Psoas muscle (tissue), 8 donors: ENCODE measurements at regions of chr6 and their contacts with region 1.

Region 1: DNA sequence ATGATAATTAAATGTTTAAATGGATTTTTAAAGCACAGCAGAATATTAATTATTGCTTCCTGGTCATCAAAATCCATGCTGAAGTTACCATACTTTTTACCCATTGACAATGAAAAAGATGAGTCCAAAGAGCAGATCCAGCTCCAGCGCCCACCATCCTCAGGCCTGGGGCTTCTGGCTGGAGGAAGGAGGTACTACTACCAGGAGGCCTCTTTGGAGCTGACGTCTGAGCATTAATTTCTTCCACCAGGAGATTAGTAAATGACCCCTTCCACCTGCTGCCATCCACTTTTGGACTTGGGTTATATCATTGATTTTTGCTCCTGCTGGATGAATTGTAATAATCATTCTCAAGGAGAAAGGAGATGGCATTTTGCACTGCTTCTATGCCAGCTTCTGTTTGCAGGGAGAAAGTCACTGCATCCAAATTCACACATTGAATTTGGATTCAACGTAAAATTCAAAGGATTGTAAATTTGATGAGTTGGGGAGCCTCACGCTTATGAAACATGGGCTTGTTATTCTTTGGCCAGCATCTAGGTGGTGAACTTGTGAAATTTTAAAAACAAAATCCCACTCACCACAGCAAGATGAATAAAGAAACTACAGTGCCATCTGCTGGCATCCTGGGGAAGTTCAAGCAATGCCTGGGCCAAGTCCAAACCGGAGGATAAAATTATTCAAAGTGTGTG is 121.8 kb downstream of the SASH1 start:
- DNase-seq: peak; percentile 56 to 65
- ATAC-seq: peak; percentile 57 to 84 (median 65)
- H3K4me3 ChIP-seq: no peak overlapping the region
- H3K27ac ChIP-seq: no peak overlapping the region
- H3K4me1 ChIP-seq: peaks cover 9% of the 10 kb centered on the region
- H3K27me3 ChIP-seq: no peaks in the 10 kb centered on the region
- CTCF ChIP-seq: peak; percentile 93

Region 2: DNA sequence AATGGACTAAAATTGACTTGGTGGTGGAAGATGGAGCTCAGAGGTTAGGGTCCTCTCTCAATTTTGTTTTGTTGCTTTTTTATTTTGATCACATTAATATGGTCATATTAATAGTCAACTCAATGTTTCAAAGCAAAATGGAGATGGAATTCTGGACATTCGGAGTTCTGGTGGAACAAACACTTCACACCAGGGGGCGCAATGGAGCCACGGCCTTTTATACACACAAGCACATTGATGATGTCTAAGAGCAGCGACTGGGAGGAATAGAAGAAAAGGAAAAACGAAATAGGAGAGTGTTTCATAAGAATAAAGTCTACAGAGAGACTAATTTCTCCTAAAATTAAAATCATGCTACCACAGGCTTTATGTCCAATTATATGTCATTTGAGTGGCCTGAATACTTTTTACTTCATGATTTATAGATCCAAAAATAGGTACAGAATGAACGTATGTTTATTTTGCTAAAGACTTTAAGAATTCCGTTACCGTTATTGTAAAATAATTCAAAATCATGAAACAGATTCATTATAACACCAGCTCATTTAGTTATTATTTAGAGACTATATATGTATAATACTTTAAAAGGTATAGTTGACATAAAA is 319.4 kb before region 1 on chr6:
- intact Hi-C with region 1: loop called (anchors 10 kb)
- DNase-seq: peak; percentile 75 to 86
- ATAC-seq: peak in 3 of 4 donors; percentile 55 to 80 (median 56)
- H3K4me3 ChIP-seq: peak overlapping the region; percentile 25
- H3K27ac ChIP-seq: no peak overlapping the region
- H3K4me1 ChIP-seq: no peaks in the 10 kb centered on the region
- H3K27me3 ChIP-seq: peaks cover 0 to 3% (median 0%) of the 10 kb centered on the region in 3 donors
- CTCF ChIP-seq: peak; percentile 78

Region 3: DNA sequence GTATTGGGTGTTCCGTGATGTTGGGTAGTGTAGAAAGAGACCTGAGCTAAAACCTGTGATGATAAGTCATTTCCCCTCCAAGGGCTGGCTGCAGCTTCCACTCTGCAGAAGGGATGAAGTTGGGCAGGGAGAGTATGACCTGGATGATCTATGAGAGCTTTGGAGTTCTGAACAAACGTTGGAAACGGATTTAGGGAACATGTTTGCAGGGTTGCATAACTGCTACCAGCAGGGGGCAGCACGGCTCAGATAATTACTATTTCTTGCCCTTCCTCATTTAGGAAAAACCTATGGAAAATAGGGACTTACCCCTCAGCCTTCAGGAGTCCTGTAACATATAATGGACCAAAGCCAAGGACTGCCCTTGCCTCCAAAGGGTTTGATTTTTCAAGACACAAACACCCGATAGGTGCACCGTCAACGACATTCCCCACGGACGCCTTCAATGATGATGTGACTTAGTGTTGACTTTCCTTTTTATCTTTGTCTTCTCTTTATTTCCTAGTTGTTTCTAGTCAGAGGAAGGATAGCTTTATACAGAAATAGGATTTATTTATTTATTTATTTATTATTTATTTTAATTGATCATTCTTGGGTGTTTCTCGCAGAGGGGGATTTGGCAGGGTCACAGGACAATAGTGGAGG is 286.8 kb before region 1 on chr6:
- intact Hi-C with region 1: loop called (anchors 2 to 10 kb)
- DNase-seq: peak; percentile 61 to 71
- ATAC-seq: peak in 1 of 4 donors; percentile 22
- H3K4me3 ChIP-seq: no peak overlapping the region
- H3K27ac ChIP-seq: no peak overlapping the region
- H3K4me1 ChIP-seq: no peaks in the 10 kb centered on the region
- H3K27me3 ChIP-seq: no peaks in the 10 kb centered on the region
- CTCF ChIP-seq: peak; percentile 82

Region 4: GRCh38 chr6:148250975-148251685 is 213.3 kb before region 1 on chr6:
- intact Hi-C with region 1: loop called in 1 of 2 experiments (anchors 5 kb)
- DNase-seq: no peak
- ATAC-seq: peak in 3 of 4 donors; percentile 61 to 80 (median 64)
- H3K4me3 ChIP-seq: no peak overlapping the region
- H3K27ac ChIP-seq: no peak overlapping the region
- H3K4me1 ChIP-seq: peaks cover 3% of the 10 kb centered on the region
- H3K27me3 ChIP-seq: no peaks in the 10 kb centered on the region
- CTCF ChIP-seq: peak; percentile 51

Region 5: DNA sequence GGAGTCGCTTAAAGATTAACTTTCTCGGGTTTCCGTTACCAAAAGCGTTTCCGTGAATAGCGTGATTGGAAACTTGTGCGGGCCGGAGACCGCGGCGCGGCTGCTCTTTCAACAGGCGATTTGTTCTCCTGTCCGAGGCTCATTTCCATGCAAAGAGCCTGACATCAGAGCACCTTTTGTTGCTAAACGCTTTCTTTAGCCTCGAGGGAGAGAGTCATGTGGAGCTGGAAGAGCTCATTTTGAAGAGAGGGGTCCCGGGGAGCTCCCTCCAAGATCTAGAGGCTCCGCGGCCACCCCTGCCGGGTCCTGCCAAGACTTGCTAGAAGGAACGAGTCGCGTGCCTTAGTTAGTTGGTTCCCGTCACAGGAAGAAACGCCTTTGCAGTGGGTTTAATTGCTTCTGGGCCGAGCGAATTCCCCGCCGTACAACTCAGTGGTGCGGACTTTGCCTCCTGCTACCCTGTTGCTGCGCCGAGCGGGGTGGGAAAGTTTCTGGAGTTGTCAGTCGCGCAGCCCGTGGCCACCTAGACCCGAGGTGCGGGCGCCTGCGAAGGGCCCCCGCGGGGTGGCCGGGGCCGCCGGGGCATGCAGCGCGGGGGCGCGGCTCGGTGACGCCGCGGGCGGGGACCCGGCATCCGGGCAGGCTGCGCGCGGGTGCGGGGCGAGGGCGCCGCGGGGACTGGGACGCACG is 122.0 kb before region 1 on chr6 and contains the start of gene SASH1:
- intact Hi-C with region 1: loop called (anchors 5 to 10 kb)
- DNase-seq: peak; percentile 64 to 79
- ATAC-seq: peak; percentile 73 to 91 (median 78)
- H3K4me3 ChIP-seq: peak within 1 kb of the TSS; percentile 79
- H3K27ac ChIP-seq: peak within 1 kb of the TSS; percentile 69
- H3K4me1 ChIP-seq: peaks cover 7% of the 10 kb centered on the region
- H3K27me3 ChIP-seq: peaks cover 0 to 3% (median 2%) of the 10 kb centered on the region in 3 donors
- CTCF ChIP-seq: no peak
- total RNA-seq, gene SASH1: 13.0 to 26.1 (median 23.0) TPM

Region 6: DNA sequence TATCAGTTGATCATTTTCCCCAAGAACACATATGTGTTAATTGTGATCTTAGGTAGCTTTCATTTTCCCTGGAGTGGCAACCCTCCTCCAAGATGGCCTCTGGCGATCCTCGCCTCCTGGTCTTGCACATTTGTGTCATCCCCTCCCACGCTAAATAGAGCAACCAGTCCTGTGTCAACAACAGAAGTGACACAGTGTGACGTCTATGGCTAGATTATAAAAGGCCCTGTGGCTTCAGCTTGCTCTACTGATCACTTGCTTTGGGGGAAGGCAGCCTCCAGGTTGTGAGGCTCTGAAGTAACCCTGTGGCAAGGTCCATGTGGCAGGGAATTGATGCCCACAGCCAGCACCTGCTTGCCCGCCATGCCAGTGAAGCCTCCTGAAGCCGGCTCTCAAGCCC is 1647.8 kb after region 1 on chr6:
- intact Hi-C with region 1: no loop called
- DNase-seq: no peak
- ATAC-seq: no peak
- H3K4me3 ChIP-seq: no peak overlapping the region
- H3K27ac ChIP-seq: no peak overlapping the region
- H3K4me1 ChIP-seq: no peaks in the 10 kb centered on the region
- H3K27me3 ChIP-seq: no peaks in the 10 kb centered on the region
- CTCF ChIP-seq: no peak